ENCODE measurements at regions of chr5 and their contacts with region 1.

Region 1: GRCh38 chr5:133423618-133424282 is 188.6 kb downstream of the FSTL4 start:
- DNase-seq: peak; percentile 87
- H3K4me3 ChIP-seq: no peak overlapping the region
- H3K27ac ChIP-seq: no peak overlapping the region
- H3K4me1 ChIP-seq: no peaks in the 10 kb centered on the region; a peak in 1 of 4 replicates
- H3K27me3 ChIP-seq: no peaks in the 10 kb centered on the region; the same call in 1 of the 2 replicates
- CTCF ChIP-seq: peak; percentile 82
- EP300 ChIP-seq: no peak
- RAD21 ChIP-seq: peak; percentile 85

Region 2: GRCh38 chr5:133412661-133413060 is 11.1 kb before region 1 on chr5:
- CTCF ChIA-PET with region 1: interaction called, 10 read pairs
- POLR2A ChIA-PET with region 1: no interaction called
- DNase-seq: no peak
- H3K4me3 ChIP-seq: no peak overlapping the region
- H3K27ac ChIP-seq: no peak overlapping the region
- H3K4me1 ChIP-seq: no peaks in the 10 kb centered on the region
- H3K27me3 ChIP-seq: no peaks in the 10 kb centered on the region; the same call in 1 of the 2 replicates
- CTCF ChIP-seq: no peak
- EP300 ChIP-seq: no peak
- RAD21 ChIP-seq: no peak

Region 3: GRCh38 chr5:133460172-133460758 is 36.5 kb after region 1 on chr5:
- CTCF ChIA-PET with region 1: interaction called, 23 read pairs
- POLR2A ChIA-PET with region 1: no interaction called
- DNase-seq: peak; percentile 55
- H3K4me3 ChIP-seq: peak overlapping the region in 1 of 2 experiments; percentile 35; a peak in 1 of 4 replicates
- H3K27ac ChIP-seq: no peak overlapping the region
- H3K4me1 ChIP-seq: peaks cover 15 to 43% of the 10 kb centered on the region in 2 experiments
- H3K27me3 ChIP-seq: no peaks in the 10 kb centered on the region
- CTCF ChIP-seq: peak; percentile 66
- EP300 ChIP-seq: no peak
- RAD21 ChIP-seq: peak; percentile 68

Region 4: GRCh38 chr5:133610489-133611356 is 187.0 kb after region 1 on chr5:
- CTCF ChIA-PET with region 1: interaction called, 97 read pairs
- POLR2A ChIA-PET with region 1: no interaction called
- DNase-seq: peak; percentile 87
- H3K4me3 ChIP-seq: peak overlapping the region; percentile 26 to 35; a peak in 3 of 4 replicates
- H3K27ac ChIP-seq: no peak overlapping the region
- H3K4me1 ChIP-seq: peaks cover 0 to 29% of the 10 kb centered on the region in 2 experiments; a peak in 2 of 4 replicates
- H3K27me3 ChIP-seq: peaks cover 37% of the 10 kb centered on the region
- CTCF ChIP-seq: peak; percentile 45
- EP300 ChIP-seq: no peak
- RAD21 ChIP-seq: peak; percentile 71

Region 5: GRCh38 chr5:133714161-133714915 is 290.6 kb after region 1 on chr5:
- CTCF ChIA-PET with region 1: interaction called, 17 read pairs
- POLR2A ChIA-PET with region 1: no interaction called
- DNase-seq: peak; percentile 74
- H3K4me3 ChIP-seq: no peak overlapping the region
- H3K27ac ChIP-seq: peak overlapping the region in 1 of 2 experiments; percentile 96; a peak in 2 of 4 replicates
- H3K4me1 ChIP-seq: peaks cover 0 to 45% of the 10 kb centered on the region in 2 experiments; a peak in 2 of 4 replicates
- H3K27me3 ChIP-seq: no peaks in the 10 kb centered on the region
- CTCF ChIP-seq: no peak
- EP300 ChIP-seq: peak in 1 of 2 experiments; percentile 96; a peak in 2 of 4 replicates
- RAD21 ChIP-seq: peak; percentile 43